Lower lobe of right lung (tissue), 2 donors: ENCODE measurements at regions of chr1 and their contacts with region 1.

Region 1: GRCh38 chr1:226062558-226063223 is at the start of gene H3-3A:
- DNase-seq: peak; percentile 98
- ATAC-seq: peak; percentile 93 to 97
- H3K4me3 ChIP-seq: peak within 1 kb of the TSS; percentile 73
- H3K27ac ChIP-seq: peak within 1 kb of the TSS; percentile 99
- H3K4me1 ChIP-seq: peaks cover 49% of the 10 kb centered on the region
- H3K27me3 ChIP-seq: no peaks in the 10 kb centered on the region
- CTCF ChIP-seq: no peak
- total RNA-seq, gene H3-3A: 504 TPM

Region 2: DNA sequence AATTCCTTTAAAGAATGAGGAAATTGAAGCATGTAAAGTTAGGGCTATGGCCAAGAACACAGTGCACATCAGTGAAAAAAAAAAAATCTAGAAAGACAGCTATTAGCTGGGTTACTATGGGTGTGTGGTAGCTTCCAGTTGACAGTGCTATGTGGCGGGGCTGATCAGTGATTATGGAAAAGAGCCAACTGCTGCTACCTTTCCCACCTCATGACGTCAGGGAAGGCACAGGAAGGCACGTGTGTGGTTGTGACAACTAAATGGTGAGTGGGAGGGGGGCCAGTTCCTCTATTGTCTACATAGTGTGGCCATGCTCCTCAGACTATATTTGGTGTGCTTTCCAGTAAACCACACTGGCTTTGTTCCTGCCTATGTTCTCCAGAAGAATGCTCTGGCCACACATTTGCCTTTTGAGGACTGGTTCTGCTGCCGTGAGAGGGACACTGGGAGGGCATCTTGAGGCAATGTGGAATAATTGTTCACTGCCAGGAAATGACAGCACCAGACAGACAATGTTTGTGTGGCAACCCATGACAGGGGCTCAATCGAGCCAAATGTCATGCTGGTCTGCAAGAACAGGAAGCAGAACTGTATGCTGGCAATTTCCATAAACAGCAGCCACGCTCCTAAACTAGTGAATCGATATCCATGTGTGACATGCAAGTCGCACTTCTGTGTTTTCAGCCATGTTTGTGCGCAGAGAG is 60.6 kb before region 1 on chr1:
- intact Hi-C with region 1: loop called (anchors 5 kb)
- DNase-seq: peak; percentile 81
- ATAC-seq: peak; percentile 30 to 70
- H3K4me3 ChIP-seq: peak overlapping the region; percentile 29
- H3K27ac ChIP-seq: peak overlapping the region; percentile 100
- H3K4me1 ChIP-seq: peaks cover 53% of the 10 kb centered on the region
- H3K27me3 ChIP-seq: no peaks in the 10 kb centered on the region
- CTCF ChIP-seq: no peak

Region 3: DNA sequence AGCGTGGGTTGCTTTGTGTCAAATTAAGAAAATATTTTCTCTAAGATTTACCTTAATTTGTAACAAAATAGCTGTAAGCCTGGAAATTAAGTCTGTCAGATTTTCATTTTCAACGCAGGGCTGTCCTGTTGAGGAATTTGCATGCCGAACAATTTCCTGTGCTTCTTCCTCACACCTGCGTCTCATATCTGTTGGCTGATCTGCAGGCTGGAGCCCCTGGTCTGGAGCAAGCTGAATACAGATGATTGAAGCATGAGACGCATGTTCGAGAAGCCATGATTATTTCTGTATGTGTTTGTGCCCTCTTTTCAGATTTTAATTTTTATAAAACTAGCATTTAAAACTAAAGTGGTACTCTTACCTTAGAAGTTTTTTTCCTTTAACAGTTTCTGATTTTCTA is 170.6 kb after region 1 on chr1:
- intact Hi-C with region 1: no loop called
- DNase-seq: no peak
- ATAC-seq: no peak
- H3K4me3 ChIP-seq: no peak overlapping the region
- H3K27ac ChIP-seq: no peak overlapping the region
- H3K4me1 ChIP-seq: no peaks in the 10 kb centered on the region
- H3K27me3 ChIP-seq: no peaks in the 10 kb centered on the region
- CTCF ChIP-seq: no peak